ENCODE measurements at regions of chr16 and their contacts with region 1.

Region 1: DNA sequence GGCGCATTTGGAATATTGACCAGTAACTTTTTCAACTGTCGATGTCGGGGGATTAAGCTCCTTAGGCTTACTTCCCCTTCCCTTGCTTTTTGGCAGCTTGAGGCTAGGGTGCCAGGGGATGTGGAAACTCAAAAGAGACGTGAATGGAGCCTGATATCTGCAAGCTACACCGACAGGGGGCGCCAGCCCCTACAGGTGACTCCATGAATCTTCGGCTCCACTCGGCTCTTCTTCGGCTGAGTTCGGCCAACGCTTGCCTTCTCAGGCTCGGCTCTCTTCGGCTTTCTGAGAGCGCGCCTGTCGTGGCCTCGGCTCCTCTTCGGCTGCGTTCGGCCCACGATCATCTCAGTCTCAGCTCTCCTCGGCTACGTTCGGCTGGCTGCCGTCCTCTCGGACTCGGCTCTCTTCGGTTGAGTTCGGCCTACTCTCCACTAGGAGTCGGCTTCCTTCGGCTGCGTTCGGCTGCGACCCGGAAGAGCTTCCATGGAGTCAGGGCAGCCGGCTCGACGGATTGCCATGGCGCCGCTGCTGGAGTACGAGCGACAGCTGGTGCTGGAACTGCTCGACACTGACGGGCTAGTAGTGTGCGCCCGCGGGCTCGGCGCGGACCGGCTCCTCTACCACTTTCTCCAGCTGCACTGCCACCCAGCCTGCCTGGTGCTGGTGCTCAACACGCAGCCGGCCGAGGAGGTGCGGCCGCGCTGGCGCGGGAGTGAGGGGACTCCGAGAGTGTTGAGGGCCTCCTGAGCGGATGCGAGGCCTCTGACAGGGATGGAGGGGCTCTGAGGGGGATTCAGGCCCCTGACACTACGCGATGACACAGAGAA is at the start of gene ERCC4:
- DNase-seq: peak; percentile 96
- ATAC-seq: peak; percentile 99
- H3K4me3 ChIP-seq: peak within 1 kb of the TSS; percentile 87
- H3K27ac ChIP-seq: peak within 1 kb of the TSS; percentile 54
- H3K4me1 ChIP-seq: no peaks in the 10 kb centered on the region
- H3K27me3 ChIP-seq: no peaks in the 10 kb centered on the region
- CTCF ChIP-seq: peak; percentile 89 to 97 (median 96)
- EP300 ChIP-seq: no peak
- POLR2A ChIP-seq: peak; percentile 97
- RAD21 ChIP-seq: peak; percentile 41; the same call in 1 of the 2 replicates
- polyA plus RNA-seq, gene ERCC4: 5.7 to 15.6 TPM

Region 2: DNA sequence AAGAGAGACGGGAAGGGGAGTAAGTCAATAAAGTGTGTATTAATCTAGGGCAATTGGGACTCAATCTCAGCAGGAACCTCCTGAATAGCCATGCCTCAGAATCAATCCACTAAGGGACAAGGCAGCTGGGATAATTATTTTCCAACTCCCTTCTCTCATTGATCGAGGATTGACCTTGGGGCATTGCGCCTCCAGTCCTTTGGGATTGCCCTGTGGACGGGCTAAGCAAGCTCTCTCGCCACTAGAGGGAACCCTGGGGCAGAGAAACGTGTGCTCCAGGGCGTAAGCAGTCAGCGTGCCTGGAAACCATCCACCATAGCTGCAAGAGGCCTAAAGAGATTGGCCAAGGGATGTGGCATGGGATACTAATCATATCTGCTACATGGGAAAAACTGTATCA is 53.8 kb before region 1 on chr16:
- CTCF ChIA-PET with region 1: interaction called, 57 read pairs
- POLR2A ChIA-PET with region 1: no interaction called
- RAD21 ChIA-PET with region 1: interaction called, 11 read pairs
- SMC1A ChIA-PET with region 1: interaction called, 7 read pairs
- in situ Hi-C with region 1: no loop called
- intact Hi-C with region 1: loop called (anchors 1 kb)
- DNase-seq: no peak
- ATAC-seq: peak; percentile 99
- H3K4me3 ChIP-seq: no peak overlapping the region
- H3K27ac ChIP-seq: no peak overlapping the region
- H3K4me1 ChIP-seq: no peaks in the 10 kb centered on the region
- H3K27me3 ChIP-seq: no peaks in the 10 kb centered on the region
- CTCF ChIP-seq: peak; percentile 64 to 80 (median 70)
- EP300 ChIP-seq: no peak
- POLR2A ChIP-seq: no peak
- RAD21 ChIP-seq: peak; percentile 46

Region 3: DNA sequence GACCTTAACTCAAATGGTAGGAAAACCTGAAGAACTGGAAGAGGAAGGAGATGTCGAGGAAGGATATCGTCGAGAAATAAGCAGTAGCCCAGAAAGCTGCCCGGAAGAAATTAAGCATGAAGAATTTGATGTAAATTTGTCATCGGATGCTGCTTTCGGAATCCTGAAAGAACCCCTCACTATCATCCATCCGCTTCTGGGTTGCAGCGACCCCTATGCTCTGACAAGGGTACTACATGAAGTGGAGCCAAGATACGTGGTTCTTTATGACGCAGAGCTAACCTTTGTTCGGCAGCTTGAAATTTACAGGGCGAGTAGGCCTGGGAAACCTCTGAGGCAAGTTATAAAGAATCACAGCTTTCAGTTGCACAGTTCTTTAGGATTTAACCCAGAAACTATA is 15.5 kb after region 1 on chr16:
- CTCF ChIA-PET with region 1: interaction called, 22 read pairs
- POLR2A ChIA-PET with region 1: no interaction called
- RAD21 ChIA-PET with region 1: interaction called, 6 read pairs
- SMC1A ChIA-PET with region 1: interaction called, 13 read pairs
- in situ Hi-C with region 1: no loop called
- intact Hi-C with region 1: no loop called
- DNase-seq: no peak
- ATAC-seq: no peak
- H3K4me3 ChIP-seq: no peak overlapping the region
- H3K27ac ChIP-seq: no peak overlapping the region
- H3K4me1 ChIP-seq: no peaks in the 10 kb centered on the region
- H3K27me3 ChIP-seq: no peaks in the 10 kb centered on the region
- CTCF ChIP-seq: peak in 2 of 3 experiments; percentile 36 to 41; a peak in 2 of 6 replicates
- EP300 ChIP-seq: no peak
- POLR2A ChIP-seq: no peak
- RAD21 ChIP-seq: no peak

Region 4: GRCh38 chr16:13968835-13969234 is 48.9 kb after region 1 on chr16:
- CTCF ChIA-PET with region 1: interaction called, 10 read pairs
- POLR2A ChIA-PET with region 1: no interaction called
- RAD21 ChIA-PET with region 1: interaction called, 4 read pairs
- SMC1A ChIA-PET with region 1: interaction called, 4 read pairs
- in situ Hi-C with region 1: no loop called
- intact Hi-C with region 1: no loop called
- DNase-seq: no peak
- ATAC-seq: no peak
- H3K4me3 ChIP-seq: no peak overlapping the region
- H3K27ac ChIP-seq: no peak overlapping the region
- H3K4me1 ChIP-seq: peaks cover 4% of the 10 kb centered on the region; the same call in 1 of the 2 replicates
- H3K27me3 ChIP-seq: no peaks in the 10 kb centered on the region
- CTCF ChIP-seq: no peak
- EP300 ChIP-seq: no peak
- POLR2A ChIP-seq: no peak
- RAD21 ChIP-seq: 0 out of 2 replicates have a peak, but pooled peaks have one; percentile 27

Region 5: DNA sequence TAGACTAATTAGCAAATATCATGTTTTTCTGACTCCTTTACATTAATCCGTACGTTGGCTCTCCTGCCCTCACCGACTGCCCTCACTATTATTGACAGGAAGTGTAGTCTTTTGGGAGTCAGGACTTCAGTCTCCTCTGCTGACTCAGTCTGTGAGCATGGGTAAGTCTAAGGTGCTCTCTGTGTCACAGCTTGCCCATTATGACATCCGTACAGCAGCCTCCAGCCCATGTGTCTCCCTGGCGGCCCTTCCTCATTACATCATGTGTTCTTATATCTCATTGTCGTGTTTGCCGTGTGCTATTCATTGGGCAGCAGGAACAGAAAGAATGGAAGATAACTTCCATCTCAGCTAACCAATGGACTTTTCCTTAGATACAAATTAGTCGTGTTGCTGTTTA is 228.7 kb after region 1 on chr16:
- CTCF ChIA-PET with region 1: interaction called, 10 read pairs
- POLR2A ChIA-PET with region 1: no interaction called
- RAD21 ChIA-PET with region 1: no interaction called
- SMC1A ChIA-PET with region 1: interaction called, 5 read pairs
- in situ Hi-C with region 1: no loop called
- intact Hi-C with region 1: no loop called
- DNase-seq: no peak
- ATAC-seq: no peak
- H3K4me3 ChIP-seq: no peak overlapping the region
- H3K27ac ChIP-seq: no peak overlapping the region
- H3K4me1 ChIP-seq: peaks cover 11% of the 10 kb centered on the region
- H3K27me3 ChIP-seq: no peaks in the 10 kb centered on the region
- CTCF ChIP-seq: no peak
- EP300 ChIP-seq: no peak
- POLR2A ChIP-seq: no peak
- RAD21 ChIP-seq: no peak

Region 6: DNA sequence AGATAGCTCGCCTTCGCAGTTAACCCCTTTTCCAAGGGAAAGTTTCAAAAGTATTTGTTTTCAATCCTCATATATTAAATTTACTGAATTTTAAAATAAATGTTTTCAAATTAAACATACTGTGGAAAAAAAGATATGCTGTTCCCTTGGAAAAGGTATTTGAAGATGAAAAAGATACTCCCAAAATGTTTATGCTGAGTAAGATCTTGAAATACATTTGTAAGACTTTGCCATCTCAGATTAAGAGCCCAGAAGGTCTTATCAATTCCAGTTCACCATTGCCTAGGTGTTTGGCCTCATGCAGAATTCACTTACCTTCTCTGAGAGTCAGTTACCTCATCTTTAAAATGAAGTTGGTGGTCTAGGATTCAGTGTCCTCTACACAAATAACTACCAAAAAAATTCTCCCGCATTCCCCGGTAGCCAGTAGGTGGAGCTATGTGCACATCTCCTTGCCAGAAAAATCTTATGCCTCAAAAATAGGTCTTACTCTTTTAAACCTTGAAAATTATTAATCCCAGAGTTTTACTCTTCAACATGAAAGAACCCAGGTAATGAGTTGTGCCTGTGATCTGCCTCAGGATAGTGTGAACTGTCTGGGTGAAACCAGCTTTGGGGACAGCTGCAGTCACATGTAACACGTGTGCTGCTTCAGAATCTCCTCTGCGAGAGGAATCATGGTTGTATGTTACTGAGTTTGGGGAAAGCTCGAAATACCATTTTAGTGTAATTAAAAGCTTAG is 329.6 kb after region 1 on chr16:
- CTCF ChIA-PET with region 1: interaction called, 51 read pairs
- POLR2A ChIA-PET with region 1: no interaction called
- RAD21 ChIA-PET with region 1: interaction called, 17 read pairs
- SMC1A ChIA-PET with region 1: interaction called, 62 read pairs
- in situ Hi-C with region 1: loop called (anchors 5 kb)
- intact Hi-C with region 1: loop called (anchors 2 kb)
- DNase-seq: peak; percentile 13
- ATAC-seq: peak; percentile 57; the same call in 2 of the 3 replicates
- H3K4me3 ChIP-seq: no peak overlapping the region
- H3K27ac ChIP-seq: no peak overlapping the region
- H3K4me1 ChIP-seq: no peaks in the 10 kb centered on the region
- H3K27me3 ChIP-seq: no peaks in the 10 kb centered on the region
- CTCF ChIP-seq: peak; percentile 85 to 91 (median 88)
- EP300 ChIP-seq: no peak
- POLR2A ChIP-seq: no peak
- RAD21 ChIP-seq: peak; percentile 88

Region 7: GRCh38 chr16:14300705-14301168 is 380.8 kb after region 1 on chr16:
- CTCF ChIA-PET with region 1: interaction called, 16 read pairs
- POLR2A ChIA-PET with region 1: interaction called, 3 read pairs
- RAD21 ChIA-PET with region 1: interaction called, 8 read pairs
- SMC1A ChIA-PET with region 1: interaction called, 5 read pairs
- in situ Hi-C with region 1: no loop called
- intact Hi-C with region 1: no loop called
- DNase-seq: no peak
- ATAC-seq: peak; percentile 76
- H3K4me3 ChIP-seq: 0 out of 2 replicates have a peak overlapping the region, but pooled peaks have one; percentile 78
- H3K27ac ChIP-seq: no peak overlapping the region
- H3K4me1 ChIP-seq: peaks cover 5% of the 10 kb centered on the region
- H3K27me3 ChIP-seq: no peaks in the 10 kb centered on the region
- CTCF ChIP-seq: peak; percentile 78 to 96 (median 84); a peak in 5 of 6 replicates
- EP300 ChIP-seq: no peak
- POLR2A ChIP-seq: no peak
- RAD21 ChIP-seq: peak; percentile 96